Endothelial cell of umbilical vein (primary cell): ENCODE measurements at regions of chrX and their contacts with region 1.

Region 1: GRCh38 chrX:95903490-95903889 is 781.2 kb upstream of the DIAPH2 start:
- DNase-seq: peak; percentile 73
- H3K4me3 ChIP-seq: no peak overlapping the region
- H3K27ac ChIP-seq: no peak overlapping the region
- H3K4me1 ChIP-seq: peaks cover 15% of the 10 kb centered on the region
- H3K27me3 ChIP-seq: no peaks in the 10 kb centered on the region
- CTCF ChIP-seq: peak; percentile 4 to 16
- POLR2A ChIP-seq: no peak

Region 2: DNA sequence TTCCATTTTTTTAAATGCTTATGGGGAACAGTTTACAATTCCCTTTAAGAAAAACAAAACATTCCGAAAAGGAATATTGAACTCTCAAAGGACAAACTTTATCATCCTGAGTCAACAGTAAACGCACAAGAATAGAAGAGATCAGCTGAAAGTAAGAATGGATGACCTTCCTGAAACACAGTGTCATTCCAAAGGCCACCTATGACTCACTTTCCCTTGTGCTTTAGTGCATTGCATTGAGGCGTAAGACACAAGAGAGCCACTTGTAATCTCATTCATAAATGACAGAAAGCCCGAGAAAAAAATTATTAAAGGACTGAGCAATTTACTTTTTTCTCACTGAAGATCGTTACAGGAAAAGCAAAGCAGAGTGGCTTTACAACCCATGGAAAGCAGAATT is 281.3 kb before region 1 on chrX:
- CTCF ChIA-PET with region 1: no interaction called
- POLR2A ChIA-PET with region 1: no interaction called
- dilution Hi-C with region 1: no loop called
- intact Hi-C with region 1: no loop called
- DNase-seq: no peak
- H3K4me3 ChIP-seq: no peak overlapping the region
- H3K27ac ChIP-seq: no peak overlapping the region
- H3K4me1 ChIP-seq: no peaks in the 10 kb centered on the region
- H3K27me3 ChIP-seq: no peaks in the 10 kb centered on the region
- CTCF ChIP-seq: no peak
- POLR2A ChIP-seq: no peak

Region 3: GRCh38 chrX:95764972-95765451 is 138.5 kb before region 1 on chrX:
- CTCF ChIA-PET with region 1: no interaction called
- POLR2A ChIA-PET with region 1: no interaction called
- dilution Hi-C with region 1: no loop called
- intact Hi-C with region 1: loop called (anchors 5 kb)
- DNase-seq: peak; percentile 49
- H3K4me3 ChIP-seq: no peak overlapping the region
- H3K27ac ChIP-seq: no peak overlapping the region
- H3K4me1 ChIP-seq: no peaks in the 10 kb centered on the region
- H3K27me3 ChIP-seq: no peaks in the 10 kb centered on the region
- CTCF ChIP-seq: peak; percentile 11 to 25
- POLR2A ChIP-seq: no peak

Region 4: DNA sequence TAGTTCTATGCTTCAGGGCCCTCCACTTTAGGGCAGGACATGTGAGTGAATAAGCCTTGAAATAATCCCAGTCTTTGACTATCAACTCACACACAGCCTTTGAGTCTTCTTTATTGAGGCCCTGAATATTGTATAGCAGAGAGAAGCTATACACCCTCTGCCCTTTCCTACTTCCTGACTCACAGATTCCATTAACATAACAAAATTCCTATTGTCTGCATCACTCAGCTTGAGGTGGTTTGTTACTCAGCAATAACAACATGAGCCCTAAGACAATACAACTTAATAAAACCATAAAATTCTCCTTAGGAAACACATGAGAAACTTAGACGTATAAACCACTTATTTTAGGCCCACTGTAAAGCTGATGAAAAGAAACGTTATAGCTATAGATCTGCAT is 100.9 kb after region 1 on chrX:
- CTCF ChIA-PET with region 1: no interaction called
- POLR2A ChIA-PET with region 1: no interaction called
- dilution Hi-C with region 1: no loop called
- intact Hi-C with region 1: loop called (anchors 5 kb)
- DNase-seq: peak; percentile 84
- H3K4me3 ChIP-seq: no peak overlapping the region
- H3K27ac ChIP-seq: peak overlapping the region; percentile 90
- H3K4me1 ChIP-seq: peaks cover 30% of the 10 kb centered on the region
- H3K27me3 ChIP-seq: no peaks in the 10 kb centered on the region
- CTCF ChIP-seq: no peak
- POLR2A ChIP-seq: no peak

Region 5: DNA sequence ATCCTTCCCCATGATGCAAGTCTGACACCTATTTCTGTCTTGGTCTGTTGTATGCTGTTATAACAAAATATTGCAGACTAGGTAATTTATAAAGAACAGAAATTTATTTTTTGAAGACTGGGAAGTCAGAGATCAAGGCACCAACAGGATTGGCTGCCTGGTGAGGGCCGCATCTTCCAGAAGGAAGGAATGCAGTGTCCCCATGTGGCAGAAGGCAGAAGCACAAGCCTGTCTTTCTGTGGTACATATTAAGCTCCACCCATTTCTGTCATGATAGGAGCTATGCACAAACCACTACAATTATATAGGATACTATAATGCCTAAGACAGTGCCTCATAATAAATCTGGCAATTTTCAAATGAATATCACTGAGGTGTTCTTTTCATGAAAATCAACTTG is 278.9 kb after region 1 on chrX:
- CTCF ChIA-PET with region 1: interaction called, 71 read pairs
- POLR2A ChIA-PET with region 1: no interaction called
- dilution Hi-C with region 1: no loop called
- intact Hi-C with region 1: loop called (anchors 1 kb)
- DNase-seq: peak; percentile 55
- H3K4me3 ChIP-seq: no peak overlapping the region
- H3K27ac ChIP-seq: no peak overlapping the region
- H3K4me1 ChIP-seq: no peaks in the 10 kb centered on the region
- H3K27me3 ChIP-seq: no peaks in the 10 kb centered on the region
- CTCF ChIP-seq: peak; percentile 53 to 64
- POLR2A ChIP-seq: no peak

Region 6: DNA sequence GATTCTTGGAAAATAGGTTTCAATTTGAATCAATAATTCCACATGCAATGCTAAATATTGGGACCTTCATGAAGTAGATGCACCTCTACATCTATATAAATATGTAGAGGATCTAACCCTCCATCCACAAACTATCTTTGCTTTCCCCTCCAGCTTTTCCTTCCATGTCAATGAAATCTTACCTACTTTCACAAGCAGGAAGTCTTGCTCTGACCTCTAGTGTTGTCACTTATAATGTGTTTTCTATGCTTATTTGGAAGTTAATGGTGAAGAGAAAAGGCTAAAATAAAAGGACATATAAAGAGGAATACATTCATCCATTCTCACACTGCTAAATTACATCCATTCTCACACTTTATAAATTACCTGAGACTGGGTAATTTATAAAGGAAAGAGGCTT is 308.5 kb after region 1 on chrX:
- CTCF ChIA-PET with region 1: no interaction called
- POLR2A ChIA-PET with region 1: no interaction called
- dilution Hi-C with region 1: no loop called
- intact Hi-C with region 1: no loop called
- DNase-seq: no peak
- H3K4me3 ChIP-seq: no peak overlapping the region
- H3K27ac ChIP-seq: no peak overlapping the region
- H3K4me1 ChIP-seq: no peaks in the 10 kb centered on the region
- H3K27me3 ChIP-seq: no peaks in the 10 kb centered on the region
- CTCF ChIP-seq: no peak
- POLR2A ChIP-seq: no peak